ENCODE measurements at regions of chr1 and their contacts with region 1.

Region 1: DNA sequence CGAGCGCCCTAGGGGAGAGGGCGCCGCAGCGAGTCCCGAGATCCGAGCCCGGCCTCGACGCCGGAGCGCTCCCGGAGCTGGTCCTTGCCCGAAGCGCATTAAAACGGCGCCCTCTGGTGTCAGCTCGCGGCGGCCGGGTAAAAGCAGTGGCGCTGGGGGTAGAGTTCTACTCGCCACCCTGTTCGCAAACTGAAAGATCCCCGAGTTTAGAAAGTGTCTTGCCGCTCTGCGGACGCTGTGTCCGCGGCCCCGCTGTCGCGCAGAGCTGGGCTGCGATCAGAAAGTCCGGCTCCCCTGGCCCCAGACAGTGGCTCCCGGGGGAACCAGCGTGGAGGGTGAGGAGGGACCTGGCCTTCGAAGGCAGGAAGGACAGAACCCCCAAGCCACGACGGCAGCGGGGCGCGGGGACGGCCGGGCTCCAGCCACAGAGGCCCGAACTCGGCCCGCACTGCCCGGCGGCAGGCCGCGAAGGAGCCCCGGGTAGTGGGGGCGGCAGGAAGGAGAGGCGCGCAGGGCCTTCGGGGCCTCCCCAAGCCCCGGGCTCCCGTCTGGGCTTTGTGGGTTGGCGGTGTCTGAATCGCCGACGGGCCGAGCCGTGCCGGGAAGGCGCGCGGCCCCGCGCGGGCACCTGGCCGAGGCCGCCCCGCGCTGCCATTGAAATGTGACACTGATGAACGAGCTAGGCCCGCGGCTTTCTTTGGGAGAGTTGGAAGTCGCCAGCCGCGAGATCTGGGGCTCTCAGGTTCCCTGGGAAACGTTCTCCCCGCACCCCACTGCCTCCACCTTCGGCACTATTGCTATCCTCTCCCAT is 39.1 kb upstream of the NFIA start:
- DNase-seq: peak; percentile 85
- H3K4me3 ChIP-seq: peak overlapping the region; percentile 39 to 59 (median 54)
- H3K27ac ChIP-seq: peak overlapping the region; percentile 62
- H3K4me1 ChIP-seq: peaks cover 2% of the 10 kb centered on the region
- H3K27me3 ChIP-seq: no peaks in the 10 kb centered on the region
- CTCF ChIP-seq: peak; percentile 85 to 94
- POLR2A ChIP-seq: no peak

Region 2: GRCh38 chr1:60160141-60160540 is 883.1 kb before region 1 on chr1:
- CTCF ChIA-PET with region 1: interaction called, 23 read pairs
- POLR2A ChIA-PET with region 1: no interaction called
- dilution Hi-C with region 1: no loop called
- intact Hi-C with region 1: loop called (anchors 1 kb)
- DNase-seq: no peak
- H3K4me3 ChIP-seq: no peak overlapping the region
- H3K27ac ChIP-seq: no peak overlapping the region
- H3K4me1 ChIP-seq: no peaks in the 10 kb centered on the region
- H3K27me3 ChIP-seq: no peaks in the 10 kb centered on the region
- CTCF ChIP-seq: no peak
- POLR2A ChIP-seq: no peak

Region 3: DNA sequence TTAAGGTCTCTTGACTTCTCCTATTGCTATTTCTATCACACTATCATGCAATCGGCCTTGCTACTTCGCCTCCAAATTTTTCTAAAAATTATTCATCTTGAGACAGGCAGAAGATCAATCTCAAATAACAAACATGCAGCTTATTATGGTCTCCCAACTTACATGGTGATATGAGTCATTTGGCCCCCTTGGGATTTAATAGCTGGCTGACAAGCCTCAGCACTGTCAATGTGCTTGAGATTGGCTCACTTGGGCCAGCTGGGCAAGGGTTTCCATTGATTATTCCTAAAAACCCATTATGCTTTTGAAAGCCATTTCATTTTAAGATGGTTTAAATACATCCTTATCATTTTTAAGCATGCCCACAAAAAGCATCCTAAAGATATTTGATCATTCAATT is 185.4 kb before region 1 on chr1:
- CTCF ChIA-PET with region 1: interaction called, 12 read pairs
- POLR2A ChIA-PET with region 1: no interaction called
- dilution Hi-C with region 1: no loop called
- intact Hi-C with region 1: no loop called
- DNase-seq: no peak
- H3K4me3 ChIP-seq: no peak overlapping the region
- H3K27ac ChIP-seq: no peak overlapping the region
- H3K4me1 ChIP-seq: peaks cover under 1% of the 10 kb centered on the region
- H3K27me3 ChIP-seq: no peaks in the 10 kb centered on the region
- CTCF ChIP-seq: no peak
- POLR2A ChIP-seq: no peak

Region 4: GRCh38 chr1:60989749-60990713 is 53.2 kb before region 1 on chr1:
- CTCF ChIA-PET with region 1: interaction called, 19 read pairs
- POLR2A ChIA-PET with region 1: no interaction called
- dilution Hi-C with region 1: no loop called
- intact Hi-C with region 1: no loop called
- DNase-seq: peak; percentile 97
- H3K4me3 ChIP-seq: no peak overlapping the region
- H3K27ac ChIP-seq: peak overlapping the region; percentile 51
- H3K4me1 ChIP-seq: peaks cover 21% of the 10 kb centered on the region
- H3K27me3 ChIP-seq: no peaks in the 10 kb centered on the region
- CTCF ChIP-seq: no peak
- POLR2A ChIP-seq: no peak

Region 5: DNA sequence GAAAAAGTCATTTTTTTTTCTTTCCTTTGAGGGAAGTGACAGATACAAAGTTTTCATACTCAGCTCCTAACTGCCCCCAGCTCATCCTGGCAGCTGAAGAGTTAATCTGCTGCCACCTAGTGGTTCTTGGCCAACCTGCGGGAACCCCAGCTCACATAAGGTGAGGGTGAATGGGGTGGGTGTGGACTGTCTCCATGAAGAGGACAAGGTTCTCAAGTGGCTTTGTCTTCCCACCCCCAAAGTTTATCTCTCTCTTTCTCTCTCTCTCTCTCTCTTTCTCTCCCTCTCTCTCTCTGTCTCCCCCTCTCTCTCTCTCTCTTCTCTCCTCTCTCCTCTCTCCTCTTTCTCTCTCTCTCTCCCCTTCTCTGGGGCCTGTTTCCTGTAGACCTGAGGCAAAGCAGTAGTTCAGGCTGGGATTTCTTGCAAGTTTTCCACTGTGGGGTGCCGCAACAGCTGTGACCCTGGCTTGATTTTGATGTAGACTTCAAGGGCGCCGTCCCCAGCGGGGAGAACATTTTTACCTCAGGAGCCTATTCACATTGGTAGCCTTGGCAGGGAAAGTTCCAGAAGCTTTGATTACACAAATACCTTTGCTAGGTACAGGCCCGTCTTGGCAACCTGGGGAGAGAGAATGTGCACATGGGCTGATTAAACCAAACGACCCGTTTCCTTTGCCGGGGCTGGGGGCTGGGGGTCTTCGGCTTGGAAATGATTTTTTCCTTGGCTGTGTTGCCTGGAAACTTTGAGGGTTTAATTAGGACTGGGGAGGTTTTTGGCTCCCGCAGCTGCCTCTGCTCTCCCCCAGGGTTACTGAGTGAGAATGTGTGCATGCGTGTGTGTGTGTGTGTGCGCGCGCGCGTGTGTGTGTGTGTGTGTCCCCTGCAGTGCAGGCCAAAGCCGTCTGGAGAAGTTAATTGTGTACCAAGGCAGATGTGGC is 545.8 kb after region 1 on chr1:
- CTCF ChIA-PET with region 1: interaction called, 110 read pairs
- POLR2A ChIA-PET with region 1: no interaction called
- dilution Hi-C with region 1: no loop called
- intact Hi-C with region 1: no loop called
- DNase-seq: peak; percentile 69
- H3K4me3 ChIP-seq: no peak overlapping the region
- H3K27ac ChIP-seq: no peak overlapping the region
- H3K4me1 ChIP-seq: no peaks in the 10 kb centered on the region
- H3K27me3 ChIP-seq: peaks cover 0 to 2% of the 10 kb centered on the region in 2 experiments
- CTCF ChIP-seq: peak; percentile 83 to 86
- POLR2A ChIP-seq: no peak